Esophagus muscularis mucosa (tissue), 4 donors: ENCODE measurements at regions of chr20 and their contacts with region 1.

Region 1: GRCh38 chr20:47501483-47502270 is at the start of gene NCOA3:
- DNase-seq: peak; percentile 95
- H3K4me3 ChIP-seq: peak within 1 kb of the TSS; percentile 91 to 100 (median 96)
- H3K27ac ChIP-seq: peak within 1 kb of the TSS; percentile 93 to 98 (median 96)
- H3K4me1 ChIP-seq: peaks cover 13 to 45% (median 31%) of the 10 kb centered on the region in 4 donors
- H3K27me3 ChIP-seq: no peaks in the 10 kb centered on the region
- CTCF ChIP-seq: peak; percentile 45 to 70 (median 53)
- EP300 ChIP-seq: no peak
- POLR2A ChIP-seq: peak; percentile 82
- total RNA-seq, gene NCOA3: 25.7 to 51.4 (median 35.8) TPM

Region 2: DNA sequence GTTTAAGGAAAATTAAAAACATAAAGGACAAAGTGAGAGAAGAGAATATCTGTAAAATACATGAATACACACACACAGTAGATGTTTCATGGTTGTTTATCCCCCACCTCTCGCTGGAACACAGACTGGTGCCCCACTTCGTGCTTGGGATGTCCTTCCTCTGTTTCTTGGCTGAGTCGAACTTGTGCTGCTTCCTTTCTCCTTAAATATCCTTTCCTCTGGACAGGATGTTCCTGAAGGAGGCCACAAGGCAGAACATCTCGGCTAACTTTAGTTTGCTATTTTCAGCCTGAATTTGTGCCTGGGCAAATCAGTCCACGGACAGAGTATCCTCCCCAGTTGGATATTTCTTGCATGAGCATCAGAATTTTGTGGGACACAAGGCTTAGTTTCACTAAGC is 90.5 kb before region 1 on chr20:
- intact Hi-C with region 1: loop called (anchors 5 kb)
- DNase-seq: no peak
- H3K4me3 ChIP-seq: peak overlapping the region in 1 of 4 donors; percentile 11
- H3K27ac ChIP-seq: peak overlapping the region; percentile 51 to 64 (median 60)
- H3K4me1 ChIP-seq: peaks cover 23 to 41% (median 30%) of the 10 kb centered on the region in 4 donors
- H3K27me3 ChIP-seq: no peaks in the 10 kb centered on the region
- CTCF ChIP-seq: no peak
- EP300 ChIP-seq: no peak
- POLR2A ChIP-seq: no peak

Region 3: GRCh38 chr20:47576516-47577033 is 74.9 kb after region 1 on chr20:
- intact Hi-C with region 1: loop called (anchors 10 kb)
- DNase-seq: peak; percentile 92
- H3K4me3 ChIP-seq: peak overlapping the region in 3 of 4 donors; percentile 2 to 19 (median 13)
- H3K27ac ChIP-seq: peak overlapping the region; percentile 29 to 66 (median 52)
- H3K4me1 ChIP-seq: peaks cover 69 to 79% (median 70%) of the 10 kb centered on the region in 4 donors
- H3K27me3 ChIP-seq: no peaks in the 10 kb centered on the region
- CTCF ChIP-seq: no peak
- EP300 ChIP-seq: no peak
- POLR2A ChIP-seq: no peak

Region 4: GRCh38 chr20:47610247-47610944 is 108.7 kb after region 1 on chr20:
- intact Hi-C with region 1: loop called (anchors 10 kb)
- DNase-seq: no peak
- H3K4me3 ChIP-seq: no peak overlapping the region
- H3K27ac ChIP-seq: peak overlapping the region in 2 of 4 donors; percentile 8 to 29
- H3K4me1 ChIP-seq: peaks cover 15 to 30% (median 22%) of the 10 kb centered on the region in 4 donors
- H3K27me3 ChIP-seq: no peaks in the 10 kb centered on the region
- CTCF ChIP-seq: no peak
- EP300 ChIP-seq: no peak
- POLR2A ChIP-seq: no peak